ENCODE measurements at regions of chr2 and their contacts with region 1.

Region 1: GRCh38 chr2:223459328-223459939 is 142.7 kb downstream of the SCG2 start:
- DNase-seq: no peak
- H3K4me3 ChIP-seq: no peak overlapping the region
- CTCF ChIP-seq: no peak

Region 2: DNA sequence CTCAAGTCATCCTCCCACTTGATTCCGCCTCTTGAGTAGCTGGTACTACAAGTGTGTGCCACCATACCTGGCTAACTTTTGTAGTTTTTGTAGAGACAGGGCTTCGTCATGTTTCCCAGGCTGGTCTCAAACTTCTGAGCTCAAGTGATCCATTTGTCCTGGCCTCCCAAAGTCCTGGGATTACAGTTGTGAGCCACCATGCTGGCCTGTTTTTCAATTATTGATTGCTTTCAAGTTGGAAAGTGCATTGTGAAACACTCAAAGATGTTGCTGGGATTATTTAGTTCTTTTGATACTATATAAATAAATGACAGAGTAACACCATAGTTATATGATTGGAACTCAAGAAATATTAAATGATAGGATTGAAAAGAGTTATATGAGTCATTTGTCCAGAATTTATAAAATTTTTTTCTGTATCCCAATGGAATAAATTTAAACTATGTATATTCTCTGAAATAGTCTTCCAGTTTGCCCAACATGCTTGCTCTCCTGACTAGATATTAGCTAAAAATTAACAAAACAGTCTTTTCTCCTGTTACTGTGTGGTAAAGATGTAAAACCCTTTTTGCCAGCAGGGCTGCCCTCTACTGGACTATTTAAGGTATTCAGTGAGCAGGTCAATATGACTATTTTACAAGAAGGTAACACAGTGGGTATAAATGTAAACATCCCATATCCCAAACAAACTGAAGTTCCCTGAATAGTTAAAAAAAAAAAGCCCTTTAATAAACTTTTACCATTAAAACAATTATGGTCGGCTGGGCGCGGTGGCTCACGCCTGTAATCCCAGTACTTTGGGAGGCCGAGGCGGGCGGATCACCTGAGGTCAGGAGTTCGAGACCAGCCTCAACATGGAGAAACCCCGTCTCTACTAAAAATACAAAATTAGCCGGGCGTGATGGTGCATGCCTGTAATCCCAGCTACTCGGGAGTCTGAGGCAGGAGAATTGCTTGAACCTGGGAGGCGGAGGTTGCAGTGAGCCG is 555.9 kb before region 1 on chr2:
- CTCF ChIA-PET with region 1: no interaction called
- POLR2A ChIA-PET with region 1: no interaction called
- DNase-seq: no peak
- H3K4me3 ChIP-seq: no peak overlapping the region
- CTCF ChIP-seq: peak; percentile 50

Region 3: GRCh38 chr2:223442847-223443246 is 16.6 kb before region 1 on chr2:
- CTCF ChIA-PET with region 1: interaction called, 22 read pairs
- POLR2A ChIA-PET with region 1: no interaction called
- DNase-seq: peak; percentile 29
- H3K4me3 ChIP-seq: no peak overlapping the region
- CTCF ChIP-seq: no peak

Region 4: DNA sequence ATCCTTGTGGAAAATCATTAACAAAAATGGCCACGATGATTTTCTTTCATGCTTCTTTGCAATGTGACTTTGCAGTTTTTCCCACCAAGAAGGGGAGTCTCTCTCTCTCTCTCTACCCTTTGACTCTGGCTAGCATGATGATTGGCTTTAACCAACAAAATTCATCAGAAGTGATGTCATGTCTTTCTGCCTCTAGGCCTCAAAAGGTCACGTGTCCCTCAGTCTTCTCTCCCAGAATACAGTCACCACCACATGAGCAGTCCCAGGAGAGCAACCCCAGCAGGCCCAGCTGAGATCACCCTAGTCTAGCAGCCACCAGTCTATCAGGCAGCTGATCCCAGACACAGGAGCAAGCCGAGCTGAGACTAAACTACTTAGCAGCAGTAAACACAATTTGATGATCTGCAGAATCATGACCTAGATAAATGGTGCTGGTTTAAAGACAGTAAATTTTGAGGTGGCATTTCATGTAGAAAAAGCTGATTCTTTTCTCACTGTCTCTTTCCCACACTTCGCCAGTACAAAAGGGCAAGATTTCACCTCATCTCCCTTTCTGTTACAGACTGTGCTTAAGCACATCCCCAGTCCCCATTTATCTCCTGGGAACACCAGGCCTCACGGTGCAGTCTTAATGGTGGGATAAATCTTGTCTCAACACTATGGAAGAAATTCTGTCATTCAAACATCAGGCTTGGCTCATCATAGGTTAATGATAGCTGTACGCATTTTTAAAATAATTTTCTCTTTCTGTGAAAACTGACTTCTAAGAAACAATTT is 10.0 kb after region 1 on chr2:
- CTCF ChIA-PET with region 1: interaction called, 11 read pairs
- POLR2A ChIA-PET with region 1: no interaction called
- DNase-seq: peak; percentile 67
- H3K4me3 ChIP-seq: no peak overlapping the region
- CTCF ChIP-seq: no peak

Region 5: GRCh38 chr2:223601932-223602666 is 142.7 kb after region 1 on chr2 and contains the start of gene SCG2:
- CTCF ChIA-PET with region 1: interaction called, 40 read pairs
- POLR2A ChIA-PET with region 1: no interaction called
- DNase-seq: peak; percentile 60
- H3K4me3 ChIP-seq: peak within 1 kb of the TSS; percentile 20; the same call in 1 of the 2 replicates
- CTCF ChIP-seq: peak; percentile 5

Measured in AG04449 (cell line).